AG04450 (cell line): ENCODE measurements at regions of chr14 and their contacts with region 1.

Region 1: DNA sequence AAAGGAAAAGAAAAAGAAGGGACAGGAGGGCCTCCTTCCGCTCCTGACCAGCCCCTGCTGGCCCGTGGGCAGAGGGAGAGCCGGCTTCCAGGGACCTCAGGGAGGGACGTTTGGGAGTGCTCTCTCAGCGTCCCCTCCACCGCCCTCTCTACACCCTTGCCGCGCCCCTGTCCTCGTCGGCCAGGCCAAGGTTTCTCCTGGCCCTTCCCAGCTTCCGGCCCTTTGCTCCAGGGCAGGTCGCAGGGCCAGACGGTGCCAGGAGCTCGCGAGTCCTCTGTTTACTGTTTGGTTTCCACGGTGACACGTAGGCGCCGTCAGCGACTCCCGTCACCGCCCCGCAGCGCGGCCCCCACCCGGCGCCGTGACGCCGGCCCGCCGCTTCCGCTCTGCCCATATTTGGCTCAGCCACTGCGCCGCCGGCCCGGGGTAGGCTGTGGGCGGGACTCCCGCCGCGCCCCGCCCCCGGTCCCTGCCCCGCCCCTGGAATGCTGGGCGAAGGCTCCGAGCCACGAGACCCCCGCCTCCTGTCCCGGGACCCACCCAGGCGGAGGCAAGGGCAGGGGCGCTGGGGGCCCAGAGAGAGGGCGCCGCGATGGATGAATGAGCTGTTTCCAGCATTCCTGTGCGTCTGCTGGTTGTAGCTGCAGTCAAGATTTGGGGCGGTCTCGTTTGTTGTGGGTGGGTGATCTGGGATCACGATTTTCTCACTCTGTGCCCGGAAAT is 15.5 kb downstream of the FOS start:
- DNase-seq: no peak
- H3K4me3 ChIP-seq: peak overlapping the region; percentile 80
- H3K27ac ChIP-seq: peak overlapping the region; percentile 92
- H3K27me3 ChIP-seq: peaks cover 6% of the 10 kb centered on the region
- CTCF ChIP-seq: no peak

Region 2: GRCh38 chr14:75132382-75133086 is 161.5 kb before region 1 on chr14:
- CTCF ChIA-PET with region 1: interaction called, 48 read pairs
- POLR2A ChIA-PET with region 1: interaction called, 7 read pairs
- DNase-seq: no peak
- H3K4me3 ChIP-seq: no peak overlapping the region
- H3K27ac ChIP-seq: no peak overlapping the region
- H3K27me3 ChIP-seq: no peaks in the 10 kb centered on the region
- CTCF ChIP-seq: peak; percentile 78

Region 3: GRCh38 chr14:75138492-75138891 is 155.6 kb before region 1 on chr14:
- CTCF ChIA-PET with region 1: interaction called, 19 read pairs
- POLR2A ChIA-PET with region 1: interaction called, 3 read pairs
- DNase-seq: no peak
- H3K4me3 ChIP-seq: no peak overlapping the region
- H3K27ac ChIP-seq: no peak overlapping the region
- H3K27me3 ChIP-seq: no peaks in the 10 kb centered on the region
- CTCF ChIP-seq: no peak

Region 4: DNA sequence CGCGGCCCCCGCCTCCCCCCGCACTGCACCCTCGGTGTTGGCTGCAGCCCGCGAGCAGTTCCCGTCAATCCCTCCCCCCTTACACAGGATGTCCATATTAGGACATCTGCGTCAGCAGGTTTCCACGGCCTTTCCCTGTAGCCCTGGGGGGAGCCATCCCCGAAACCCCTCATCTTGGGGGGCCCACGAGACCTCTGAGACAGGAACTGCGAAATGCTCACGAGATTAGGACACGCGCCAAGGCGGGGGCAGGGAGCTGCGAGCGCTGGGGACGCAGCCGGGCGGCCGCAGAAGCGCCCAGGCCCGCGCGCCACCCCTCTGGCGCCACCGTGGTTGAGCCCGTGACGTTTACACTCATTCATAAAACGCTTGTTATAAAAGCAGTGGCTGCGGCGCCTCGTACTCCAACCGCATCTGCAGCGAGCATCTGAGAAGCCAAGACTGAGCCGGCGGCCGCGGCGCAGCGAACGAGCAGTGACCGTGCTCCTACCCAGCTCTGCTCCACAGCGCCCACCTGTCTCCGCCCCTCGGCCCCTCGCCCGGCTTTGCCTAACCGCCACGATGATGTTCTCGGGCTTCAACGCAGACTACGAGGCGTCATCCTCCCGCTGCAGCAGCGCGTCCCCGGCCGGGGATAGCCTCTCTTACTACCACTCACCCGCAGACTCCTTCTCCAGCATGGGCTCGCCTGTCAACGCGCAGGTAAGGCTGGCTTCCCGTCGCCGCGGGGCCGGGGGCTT is 15.5 kb before region 1 on chr14 and contains the start of gene FOS:
- CTCF ChIA-PET with region 1: interaction called, 7 read pairs
- POLR2A ChIA-PET with region 1: interaction called, 13 read pairs
- DNase-seq: no peak
- H3K4me3 ChIP-seq: peak within 1 kb of the TSS; percentile 90
- H3K27ac ChIP-seq: peak within 1 kb of the TSS; percentile 87
- H3K27me3 ChIP-seq: no peaks in the 10 kb centered on the region
- CTCF ChIP-seq: no peak
- polyA plus RNA-seq, gene FOS: 30.6 and 55.8 TPM in 2 replicates

Region 5: GRCh38 chr14:75340921-75341320 is 46.8 kb after region 1 on chr14:
- CTCF ChIA-PET with region 1: no interaction called
- POLR2A ChIA-PET with region 1: no interaction called
- DNase-seq: no peak
- H3K4me3 ChIP-seq: no peak overlapping the region
- H3K27ac ChIP-seq: no peak overlapping the region
- H3K27me3 ChIP-seq: peaks cover 22% of the 10 kb centered on the region
- CTCF ChIP-seq: no peak

Region 6: GRCh38 chr14:75418849-75419768 is 125.0 kb after region 1 on chr14:
- CTCF ChIA-PET with region 1: interaction called, 10 read pairs
- POLR2A ChIA-PET with region 1: no interaction called
- DNase-seq: no peak
- H3K4me3 ChIP-seq: no peak overlapping the region
- H3K27ac ChIP-seq: no peak overlapping the region
- H3K27me3 ChIP-seq: peaks cover 3% of the 10 kb centered on the region
- CTCF ChIP-seq: no peak